ENCODE measurements at regions of chr14 and their contacts with region 1.

Region 1: GRCh38 chr14:61196792-61197191 is 84.3 kb downstream of the TMEM30B start:
- DNase-seq: no peak
- ATAC-seq: peak; percentile 72 to 87 (median 84)
- H3K4me3 ChIP-seq: no peak overlapping the region
- H3K27ac ChIP-seq: peak overlapping the region; percentile 71
- H3K4me1 ChIP-seq: peaks cover 15% of the 10 kb centered on the region
- H3K27me3 ChIP-seq: no peaks in the 10 kb centered on the region
- CTCF ChIP-seq: peak; percentile 51

Region 2: GRCh38 chr14:61034416-61035120 is 162.2 kb before region 1 on chr14:
- intact Hi-C with region 1: loop called in 1 of 2 experiments (anchors 10 kb)
- DNase-seq: no peak
- ATAC-seq: no peak
- H3K4me3 ChIP-seq: no peak overlapping the region
- H3K27ac ChIP-seq: no peak overlapping the region
- H3K4me1 ChIP-seq: peaks cover 11% of the 10 kb centered on the region
- H3K27me3 ChIP-seq: no peaks in the 10 kb centered on the region
- CTCF ChIP-seq: no peak

Region 3: GRCh38 chr14:61106959-61107641 is 89.7 kb before region 1 on chr14:
- intact Hi-C with region 1: no loop called
- DNase-seq: peak; percentile 77 to 83
- ATAC-seq: peak; percentile 30 to 53 (median 32)
- H3K4me3 ChIP-seq: peak overlapping the region; percentile 6
- H3K27ac ChIP-seq: peak overlapping the region; percentile 73
- H3K4me1 ChIP-seq: peaks cover 74% of the 10 kb centered on the region
- H3K27me3 ChIP-seq: no peaks in the 10 kb centered on the region
- CTCF ChIP-seq: peak; percentile 17